ENCODE measurements at regions of chr6 and their contacts with region 1.

Region 1: DNA sequence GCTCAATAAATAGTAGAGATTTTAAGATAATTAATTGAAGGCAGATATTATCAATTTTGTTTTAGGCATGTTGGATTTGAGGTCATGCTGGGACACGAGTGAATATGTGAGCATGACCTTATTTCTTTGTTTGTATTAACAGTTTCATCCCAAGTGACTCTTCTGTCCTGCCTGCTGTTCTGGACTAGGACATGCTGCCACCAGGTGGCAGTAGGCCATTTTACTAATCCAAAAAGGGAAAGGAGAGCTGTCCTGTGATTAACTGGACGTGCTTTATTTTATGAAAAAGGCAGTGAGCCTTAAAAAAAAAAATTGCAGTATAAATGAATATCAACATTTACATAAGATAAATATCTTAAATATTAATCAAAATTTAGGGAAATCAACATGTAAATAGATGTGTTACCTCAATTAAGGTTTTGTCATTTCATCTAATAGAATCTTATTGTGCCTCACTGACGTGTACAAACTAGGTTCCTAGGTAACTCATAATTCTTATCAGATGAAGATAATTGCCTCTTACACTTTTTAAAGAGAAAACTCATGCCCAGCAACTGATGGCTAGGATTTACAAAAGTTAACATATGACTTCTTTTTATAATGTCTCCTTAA is 49.8 kb downstream of the FRK start:
- DNase-seq: peak; percentile 79
- H3K4me3 ChIP-seq: no peak overlapping the region
- H3K27ac ChIP-seq: no peak overlapping the region
- H3K4me1 ChIP-seq: peaks cover 35% of the 10 kb centered on the region
- H3K27me3 ChIP-seq: no peaks in the 10 kb centered on the region
- CTCF ChIP-seq: peak; percentile 92

Region 2: GRCh38 chr6:116078522-116078921 is 67.6 kb after region 1 on chr6:
- CTCF ChIA-PET with region 1: interaction called, 10 read pairs
- POLR2A ChIA-PET with region 1: no interaction called
- intact Hi-C with region 1: no loop called
- DNase-seq: no peak
- H3K4me3 ChIP-seq: no peak overlapping the region
- H3K27ac ChIP-seq: no peak overlapping the region
- H3K4me1 ChIP-seq: no peaks in the 10 kb centered on the region
- H3K27me3 ChIP-seq: no peaks in the 10 kb centered on the region
- CTCF ChIP-seq: 0 out of 2 replicates have a peak, but pooled peaks have one; percentile 28

Region 3: DNA sequence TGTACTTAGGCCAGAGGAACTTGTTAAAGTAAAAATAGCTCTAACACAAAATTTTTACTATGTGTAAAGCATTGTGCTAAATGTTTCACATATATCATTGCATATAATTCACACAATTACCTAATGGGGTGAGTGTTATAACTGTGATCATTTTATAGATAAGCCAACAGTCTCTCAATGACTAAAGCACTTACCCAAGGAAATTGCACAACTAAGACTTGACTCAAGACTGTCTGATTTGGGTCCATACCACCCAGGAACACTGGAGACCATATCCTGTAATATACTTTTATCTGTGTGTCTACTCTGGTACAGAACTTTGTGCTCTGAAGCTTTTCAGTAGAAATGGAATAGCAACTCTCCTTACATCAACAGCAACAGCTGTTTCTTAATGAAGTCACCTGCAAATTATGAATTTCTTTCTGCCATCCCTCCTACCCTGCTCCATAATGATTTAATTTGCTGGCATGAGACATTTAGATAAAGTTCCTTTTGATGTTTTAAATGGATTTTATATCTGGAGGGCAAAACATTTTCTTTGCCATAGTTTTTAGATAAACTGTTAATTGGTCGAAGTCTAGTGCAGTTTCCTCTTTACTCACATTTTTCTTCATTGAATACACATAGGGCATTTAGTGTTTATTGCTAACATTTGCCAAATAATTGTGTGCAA is 195.5 kb after region 1 on chr6:
- CTCF ChIA-PET with region 1: no interaction called
- POLR2A ChIA-PET with region 1: no interaction called
- intact Hi-C with region 1: no loop called
- DNase-seq: peak; percentile 24
- H3K4me3 ChIP-seq: no peak overlapping the region
- H3K27ac ChIP-seq: no peak overlapping the region
- H3K4me1 ChIP-seq: no peaks in the 10 kb centered on the region
- H3K27me3 ChIP-seq: no peaks in the 10 kb centered on the region
- CTCF ChIP-seq: no peak

Measured in A673 (cell line).